Gastrocnemius medialis (tissue), 4 donors: ENCODE measurements at regions of chr14 and their contacts with region 1.

Region 1: DNA sequence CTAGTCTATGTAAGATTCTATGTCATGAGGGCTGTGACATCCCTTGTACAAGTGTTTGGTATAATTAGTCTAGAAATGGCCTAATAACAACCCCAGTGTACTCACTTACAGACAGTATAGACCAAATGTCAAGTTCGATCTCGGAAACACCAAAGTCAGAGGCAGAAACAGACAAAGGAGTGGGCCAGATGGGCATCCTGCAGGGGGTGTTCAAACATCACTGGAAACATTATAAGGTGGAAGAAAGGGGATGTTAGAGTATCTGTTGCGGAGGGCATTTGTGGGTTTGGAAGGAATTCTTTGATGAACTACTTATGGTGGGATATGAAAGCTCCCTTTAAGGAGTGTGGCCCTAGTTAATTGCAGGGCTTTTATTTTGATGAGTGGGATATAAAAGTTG is 134.6 kb downstream of the ESR2 start:
- DNase-seq: no peak
- ATAC-seq: peak in 1 of 2 donors; percentile 36
- H3K4me3 ChIP-seq: no peak overlapping the region
- H3K27ac ChIP-seq: no peak overlapping the region
- H3K4me1 ChIP-seq: no peaks in the 10 kb centered on the region
- H3K27me3 ChIP-seq: no peaks in the 10 kb centered on the region
- CTCF ChIP-seq: peak in 1 of 5 experiments; percentile 21
- POLR2A ChIP-seq: no peak

Region 2: GRCh38 chr14:64026600-64026999 is 133.0 kb before region 1 on chr14:
- in situ Hi-C with region 1: loop called in 1 of 4 experiments (anchors 10 kb)
- intact Hi-C with region 1: no loop called
- DNase-seq: no peak
- ATAC-seq: no peak
- H3K4me3 ChIP-seq: no peak overlapping the region
- H3K27ac ChIP-seq: no peak overlapping the region
- H3K4me1 ChIP-seq: no peaks in the 10 kb centered on the region
- H3K27me3 ChIP-seq: no peaks in the 10 kb centered on the region
- CTCF ChIP-seq: no peak
- POLR2A ChIP-seq: no peak